Dorsolateral prefrontal cortex (tissue), 120 donors: ENCODE measurements at regions of chr14 and their contacts with region 1.

Region 1: DNA sequence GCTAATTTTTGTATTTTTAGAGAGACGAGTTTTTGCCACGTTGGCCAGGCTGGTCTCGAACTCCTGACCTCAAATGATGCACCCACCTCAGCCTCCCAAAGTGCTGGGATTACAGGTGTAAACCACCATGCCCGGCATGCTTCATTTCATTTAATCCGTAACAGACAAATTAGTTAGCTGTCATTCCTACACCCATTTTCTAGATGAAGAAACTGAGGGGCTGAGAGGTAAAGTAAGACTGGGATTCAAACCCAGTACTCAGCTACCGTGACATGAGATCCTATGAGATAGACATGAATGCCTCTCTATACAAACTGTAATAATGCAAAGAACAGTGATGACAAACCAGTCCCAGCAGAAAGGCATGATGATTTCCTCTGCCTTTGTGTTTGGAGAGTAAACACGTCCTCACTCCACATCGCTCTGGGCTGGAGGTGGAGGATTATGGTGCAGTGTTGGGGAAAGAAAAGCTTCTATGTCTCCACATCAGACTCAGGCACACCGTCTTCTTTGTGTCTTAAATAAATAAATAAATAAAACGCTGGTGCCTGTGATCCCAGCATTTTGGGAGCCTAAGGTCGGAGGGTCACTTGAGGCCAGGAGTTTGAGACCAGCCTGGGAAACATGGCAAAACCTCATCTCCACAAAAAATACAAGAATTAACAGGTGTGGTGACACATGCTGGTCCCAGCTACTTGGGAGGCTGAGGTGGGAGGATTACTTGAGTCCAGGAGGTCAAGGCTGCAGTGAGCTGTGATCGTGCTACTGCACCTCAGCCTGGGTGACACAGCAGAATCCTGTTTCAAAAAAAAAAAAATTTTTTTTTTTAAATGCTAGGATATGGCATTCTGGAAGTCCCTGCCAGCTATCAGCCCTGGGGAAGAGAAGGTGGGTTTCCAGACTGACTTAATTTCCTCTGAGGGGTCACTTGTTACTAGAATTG is 10.5 kb downstream of the VSX2 start:
- DNase-seq: no peak
- H3K4me3 ChIP-seq: no peak overlapping the region
- H3K27ac ChIP-seq: no peak overlapping the region
- H3K27me3 ChIP-seq: peaks cover 0 to 16% (median 0%) of the 10 kb centered on the region in 45 donors
- CTCF ChIP-seq: no peak

Region 2: DNA sequence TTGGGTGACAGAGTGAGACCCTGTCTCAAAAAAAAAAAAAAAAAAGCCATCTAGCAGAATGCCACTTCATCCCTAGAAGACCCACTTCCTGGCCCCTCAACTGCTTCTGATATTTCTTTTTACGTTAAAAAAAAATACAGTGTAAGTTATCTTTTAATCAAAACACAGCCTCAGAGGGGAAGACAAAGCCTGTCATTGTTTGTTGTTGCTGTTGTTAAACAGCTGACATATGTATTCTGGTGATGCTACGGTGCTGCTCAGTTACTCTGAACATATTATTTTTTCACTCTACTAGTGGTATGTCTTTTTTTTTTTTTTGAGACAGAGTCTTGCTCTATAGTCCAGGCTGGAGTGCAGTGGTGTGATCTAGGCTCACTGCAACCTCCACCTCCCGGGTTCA is 937.0 kb before region 1 on chr14:
- intact Hi-C with region 1: no loop called
- DNase-seq: no peak
- H3K4me3 ChIP-seq: no peak overlapping the region
- H3K27ac ChIP-seq: peak overlapping the region in 2 of 59 donors; percentile 21 to 33
- H3K27me3 ChIP-seq: no peaks in the 10 kb centered on the region
- CTCF ChIP-seq: no peak

Region 3: DNA sequence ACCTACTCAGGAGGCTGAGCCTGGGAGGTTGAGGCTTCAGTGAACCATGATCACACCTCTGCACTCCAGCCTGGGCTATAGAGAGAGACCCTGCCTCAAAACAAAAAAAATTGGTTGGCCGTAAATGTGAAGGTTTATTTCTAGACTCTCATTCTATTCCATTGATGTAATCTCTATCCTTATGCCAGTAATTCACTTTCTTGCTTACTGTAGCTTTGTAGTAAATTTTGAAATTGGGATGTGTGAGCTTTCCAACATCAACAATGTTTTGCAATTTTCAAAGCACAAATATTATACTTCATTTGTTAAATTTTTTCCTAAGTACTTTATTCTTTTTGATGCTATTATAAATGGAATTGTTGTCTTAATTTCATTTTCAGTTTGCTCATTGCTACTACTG is 140.3 kb before region 1 on chr14:
- intact Hi-C with region 1: loop called (anchors 1 to 5 kb)
- DNase-seq: no peak
- H3K4me3 ChIP-seq: no peak overlapping the region
- H3K27ac ChIP-seq: no peak overlapping the region
- H3K27me3 ChIP-seq: no peaks in the 10 kb centered on the region
- CTCF ChIP-seq: no peak

Region 4: GRCh38 chr14:74217672-74218448 is 31.8 kb before region 1 on chr14:
- intact Hi-C with region 1: loop called in 1 of 2 experiments (anchors 2 kb)
- DNase-seq: peak; percentile 45 to 83 (median 60)
- H3K4me3 ChIP-seq: peak overlapping the region in 47 of 59 donors; percentile 5 to 55 (median 35)
- H3K27ac ChIP-seq: no peak overlapping the region
- H3K27me3 ChIP-seq: peaks cover 0 to 39% (median 8%) of the 10 kb centered on the region in 45 donors
- CTCF ChIP-seq: peak; percentile 42 to 88 (median 80)

Region 5: DNA sequence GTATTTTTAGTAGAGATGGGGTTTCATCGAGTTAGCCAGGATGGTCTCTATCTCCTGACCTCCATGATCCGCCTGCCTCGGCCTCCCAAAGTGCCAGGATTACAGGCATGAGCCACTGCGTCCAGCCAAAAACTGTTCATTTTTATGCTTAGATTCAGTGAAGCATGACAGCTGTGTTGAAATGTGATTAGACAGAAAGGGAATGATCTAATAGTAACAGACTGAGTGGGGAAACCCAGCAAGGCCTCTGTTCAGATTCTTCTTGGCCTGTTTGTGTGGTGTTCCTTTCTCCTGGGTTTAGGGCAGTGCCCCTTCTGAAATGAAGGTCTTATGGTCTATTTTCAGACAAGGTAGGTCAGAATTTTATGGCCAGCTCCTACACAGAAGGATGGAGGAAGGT is 64.9 kb after region 1 on chr14:
- intact Hi-C with region 1: no loop called
- DNase-seq: no peak
- H3K4me3 ChIP-seq: no peak overlapping the region
- H3K27ac ChIP-seq: no peak overlapping the region
- H3K27me3 ChIP-seq: no peaks in the 10 kb centered on the region
- CTCF ChIP-seq: no peak

Region 6: GRCh38 chr14:74402401-74403251 is 152.9 kb after region 1 on chr14:
- intact Hi-C with region 1: no loop called
- DNase-seq: no peak
- H3K4me3 ChIP-seq: no peak overlapping the region
- H3K27ac ChIP-seq: no peak overlapping the region
- H3K27me3 ChIP-seq: peaks cover 0 to 33% (median 0%) of the 10 kb centered on the region in 45 donors
- CTCF ChIP-seq: no peak